ENCODE measurements at regions of chr6 and their contacts with region 1.

Region 1: DNA sequence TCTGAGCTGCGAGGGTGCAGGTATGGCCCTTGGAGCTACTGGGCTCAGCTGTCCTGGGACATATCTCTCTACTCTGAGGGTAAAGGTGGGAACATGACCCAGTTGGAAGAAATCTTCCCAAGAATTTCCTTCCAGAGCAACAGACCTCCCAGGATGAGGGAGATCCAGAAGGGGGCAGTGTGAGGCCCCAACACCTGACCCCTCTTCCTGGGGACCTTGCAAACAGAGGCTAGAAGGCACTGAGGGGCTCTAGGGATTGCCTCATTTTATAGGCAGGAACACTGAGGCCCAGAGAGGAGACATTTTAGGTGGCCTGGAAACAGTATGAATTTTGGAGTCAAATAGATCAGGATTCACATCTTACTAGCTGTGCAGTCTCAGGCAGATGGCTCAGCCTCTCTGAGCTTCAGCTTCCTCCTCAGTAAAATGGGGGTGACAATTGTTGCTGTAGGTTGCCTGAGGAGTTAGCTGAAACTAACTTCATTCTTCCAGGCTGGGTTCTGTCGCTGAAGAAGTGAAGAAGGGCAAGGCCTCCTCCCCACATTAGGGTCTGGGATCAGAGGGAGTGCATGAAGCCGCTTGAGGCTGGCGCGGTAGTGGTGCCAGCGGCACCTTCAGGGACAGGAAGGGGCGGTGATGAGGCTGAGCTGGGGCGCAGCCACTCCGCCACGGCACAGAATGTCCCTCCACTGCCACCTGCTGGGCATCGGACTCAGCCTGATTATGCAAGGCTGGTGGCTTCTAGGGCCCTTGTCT is 11.4 kb downstream of the KCNK17 start:
- DNase-seq: peak; percentile 88 to 95
- ATAC-seq: peak; percentile 88
- H3K4me3 ChIP-seq: no peak overlapping the region
- H3K27ac ChIP-seq: no peak overlapping the region
- H3K4me1 ChIP-seq: no peaks in the 10 kb centered on the region
- H3K27me3 ChIP-seq: no peaks in the 10 kb centered on the region

Region 2: GRCh38 chr6:38871741-38872568 is 430.9 kb before region 1 on chr6:
- intact Hi-C with region 1: loop called in 1 of 2 experiments (anchors 10 kb)
- DNase-seq: no peak
- ATAC-seq: no peak
- H3K4me3 ChIP-seq: no peak overlapping the region
- H3K27ac ChIP-seq: no peak overlapping the region
- H3K4me1 ChIP-seq: no peaks in the 10 kb centered on the region
- H3K27me3 ChIP-seq: peaks cover 0 to 4% of the 10 kb centered on the region in 2 donors

Region 3: DNA sequence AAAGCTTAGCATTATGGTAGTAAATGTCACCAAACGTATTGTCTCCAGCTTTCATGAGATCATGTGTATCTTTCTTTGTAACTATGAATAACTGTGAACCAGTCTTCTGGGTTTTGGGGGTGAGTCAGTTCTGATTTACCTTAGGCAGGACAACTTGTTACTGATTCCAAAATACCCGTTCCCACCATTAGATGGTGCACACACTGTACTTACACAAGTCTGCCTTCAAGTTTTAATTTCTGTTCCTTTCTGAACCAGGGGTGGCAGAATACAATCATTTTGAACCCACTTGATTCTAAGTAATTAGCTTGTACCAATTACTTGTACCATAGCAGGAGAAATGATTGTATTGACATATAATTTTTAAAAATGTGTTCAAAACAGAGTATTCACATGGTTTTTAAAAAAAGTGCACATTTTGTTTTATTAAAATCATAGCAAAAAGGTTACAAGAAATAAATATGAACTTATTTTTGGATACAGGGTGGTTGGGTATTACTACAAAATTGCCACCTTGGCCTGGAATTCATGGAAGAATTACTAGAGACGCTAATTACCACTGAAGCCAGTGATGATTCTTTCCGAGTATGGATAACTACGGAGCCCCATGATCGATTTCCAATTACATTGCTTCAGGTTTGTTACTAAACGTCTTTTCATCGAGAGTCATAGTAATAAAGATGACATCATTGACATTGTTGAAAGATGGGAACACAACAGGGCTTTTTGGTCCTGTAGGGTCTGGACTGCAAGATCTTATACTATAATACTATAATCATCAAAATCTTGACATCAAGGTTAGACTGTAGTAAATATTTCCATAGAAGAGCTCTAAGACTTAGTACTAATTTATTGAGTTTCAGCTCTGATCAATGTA is 329.4 kb before region 1 on chr6:
- intact Hi-C with region 1: loop called (anchors 10 kb)
- DNase-seq: no peak
- ATAC-seq: no peak
- H3K4me3 ChIP-seq: no peak overlapping the region
- H3K27ac ChIP-seq: no peak overlapping the region
- H3K4me1 ChIP-seq: no peaks in the 10 kb centered on the region
- H3K27me3 ChIP-seq: peaks cover 0 to 2% of the 10 kb centered on the region in 2 donors

Region 4: GRCh38 chr6:39166189-39166911 is 136.5 kb before region 1 on chr6:
- intact Hi-C with region 1: loop called (anchors 1 kb)
- DNase-seq: peak; percentile 87 to 96
- ATAC-seq: peak; percentile 80
- H3K4me3 ChIP-seq: no peak overlapping the region
- H3K27ac ChIP-seq: no peak overlapping the region
- H3K4me1 ChIP-seq: no peaks in the 10 kb centered on the region
- H3K27me3 ChIP-seq: no peaks in the 10 kb centered on the region

Measured in aorta (tissue), 5 donors.